ENCODE measurements at regions of chr15 and their contacts with region 1.

Region 1: GRCh38 chr15:85646538-85647091 is 148.1 kb downstream of the KLHL25 start:
- DNase-seq: peak; percentile 50
- CTCF ChIP-seq: no peak

Region 2: GRCh38 chr15:85443593-85444087 is 203.0 kb before region 1 on chr15:
- CTCF ChIA-PET with region 1: no interaction called
- POLR2A ChIA-PET with region 1: no interaction called
- DNase-seq: no peak
- CTCF ChIP-seq: no peak

Region 3: GRCh38 chr15:85456798-85457197 is 189.8 kb before region 1 on chr15:
- CTCF ChIA-PET with region 1: no interaction called
- POLR2A ChIA-PET with region 1: no interaction called
- DNase-seq: no peak
- CTCF ChIP-seq: no peak

Region 4: GRCh38 chr15:85658816-85659215 is 12.2 kb after region 1 on chr15:
- CTCF ChIA-PET with region 1: interaction called, 38 read pairs
- POLR2A ChIA-PET with region 1: interaction called, 3 read pairs
- DNase-seq: no peak
- CTCF ChIP-seq: no peak

Measured in GM10248 (cell line).